Colonic mucosa (tissue), 4 donors: ENCODE measurements at regions of chr3 and their contacts with region 1.

Region 1: DNA sequence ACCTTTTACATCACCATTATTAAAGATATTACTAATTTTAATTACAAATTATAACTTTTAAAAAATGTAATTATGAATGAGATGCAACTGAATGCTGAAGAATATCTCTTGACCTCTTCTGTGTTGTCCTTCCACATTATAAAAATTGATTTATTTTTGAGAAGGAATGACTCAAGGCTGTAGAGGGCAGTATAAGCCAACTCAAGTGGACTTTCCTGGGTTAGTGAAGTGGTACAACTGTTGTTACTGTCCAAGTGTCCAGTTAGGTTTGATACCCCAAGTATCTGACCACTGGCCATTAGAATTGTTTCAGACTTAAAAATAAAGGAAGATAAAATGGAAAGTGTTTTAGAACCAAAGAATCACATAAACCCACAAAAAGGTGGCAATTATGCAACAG is 51.9 kb downstream of the BBX start:
- DNase-seq: no peak
- H3K4me3 ChIP-seq: no peak overlapping the region
- H3K27ac ChIP-seq: no peak overlapping the region
- H3K4me1 ChIP-seq: no peaks in the 10 kb centered on the region
- H3K27me3 ChIP-seq: no peaks in the 10 kb centered on the region
- CTCF ChIP-seq: peak; percentile 49

Region 2: GRCh38 chr3:107740992-107741896 is 166.6 kb after region 1 on chr3:
- intact Hi-C with region 1: loop called (anchors 10 kb)
- DNase-seq: no peak
- H3K4me3 ChIP-seq: no peak overlapping the region
- H3K27ac ChIP-seq: no peak overlapping the region
- H3K4me1 ChIP-seq: no peaks in the 10 kb centered on the region
- H3K27me3 ChIP-seq: no peaks in the 10 kb centered on the region
- CTCF ChIP-seq: peak; percentile 56

Region 3: GRCh38 chr3:107927361-107928083 is 352.9 kb after region 1 on chr3:
- intact Hi-C with region 1: loop called (anchors 10 kb)
- DNase-seq: peak; percentile 69
- H3K4me3 ChIP-seq: peak overlapping the region; percentile 47
- H3K27ac ChIP-seq: no peak overlapping the region
- H3K4me1 ChIP-seq: no peaks in the 10 kb centered on the region
- H3K27me3 ChIP-seq: no peaks in the 10 kb centered on the region
- CTCF ChIP-seq: peak; percentile 88